ENCODE measurements at regions of chrX and their contacts with region 1.

Region 1: DNA sequence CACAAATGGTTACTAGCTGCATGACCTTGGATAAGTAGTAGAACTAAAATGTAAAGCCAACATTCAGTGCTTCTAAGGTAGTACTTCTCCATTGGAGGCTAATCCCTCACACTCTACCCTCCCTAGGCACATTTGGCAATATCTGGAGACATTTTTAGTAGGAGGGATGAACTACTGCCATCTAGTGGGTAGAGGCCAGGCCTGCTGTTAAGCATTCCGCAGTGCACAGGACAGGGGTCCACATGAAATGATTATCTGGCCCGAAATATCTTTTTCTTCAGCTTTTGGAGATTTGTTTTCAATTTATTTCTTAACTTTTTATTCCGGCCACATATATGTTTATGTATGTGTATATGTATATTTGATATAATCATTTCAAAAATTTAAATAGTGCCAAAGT is 36.0 kb upstream of the SPANXC start:
- DNase-seq: no peak
- H3K4me3 ChIP-seq: no peak overlapping the region
- H3K4me3 Mint-ChIP-seq: no peak overlapping the region
- H3K27ac Mint-ChIP-seq: no peak overlapping the region
- H3K4me1 ChIP-seq: no peaks in the 10 kb centered on the region
- H3K4me1 Mint-ChIP-seq: no peaks in the 10 kb centered on the region
- H3K27me3 ChIP-seq: no peaks in the 10 kb centered on the region
- H3K27me3 Mint-ChIP-seq: no peaks in the 10 kb centered on the region
- CTCF ChIP-seq: no peak

Region 2: GRCh38 chrX:142089198-142089597 is 810.9 kb after region 1 on chrX:
- CTCF ChIA-PET with region 1: no interaction called
- POLR2A ChIA-PET with region 1: no interaction called
- intact Hi-C with region 1: loop called (anchors 5 kb)
- DNase-seq: no peak
- H3K4me3 ChIP-seq: no peak overlapping the region
- H3K4me3 Mint-ChIP-seq: no peak overlapping the region
- H3K27ac Mint-ChIP-seq: no peak overlapping the region
- H3K4me1 ChIP-seq: no peaks in the 10 kb centered on the region
- H3K4me1 Mint-ChIP-seq: no peaks in the 10 kb centered on the region
- H3K27me3 ChIP-seq: no peaks in the 10 kb centered on the region
- H3K27me3 Mint-ChIP-seq: no peaks in the 10 kb centered on the region
- CTCF ChIP-seq: no peak

Measured in Caco-2 (cell line).